BJ (cell line): ENCODE measurements at regions of chr3 and their contacts with region 1.

Region 1: DNA sequence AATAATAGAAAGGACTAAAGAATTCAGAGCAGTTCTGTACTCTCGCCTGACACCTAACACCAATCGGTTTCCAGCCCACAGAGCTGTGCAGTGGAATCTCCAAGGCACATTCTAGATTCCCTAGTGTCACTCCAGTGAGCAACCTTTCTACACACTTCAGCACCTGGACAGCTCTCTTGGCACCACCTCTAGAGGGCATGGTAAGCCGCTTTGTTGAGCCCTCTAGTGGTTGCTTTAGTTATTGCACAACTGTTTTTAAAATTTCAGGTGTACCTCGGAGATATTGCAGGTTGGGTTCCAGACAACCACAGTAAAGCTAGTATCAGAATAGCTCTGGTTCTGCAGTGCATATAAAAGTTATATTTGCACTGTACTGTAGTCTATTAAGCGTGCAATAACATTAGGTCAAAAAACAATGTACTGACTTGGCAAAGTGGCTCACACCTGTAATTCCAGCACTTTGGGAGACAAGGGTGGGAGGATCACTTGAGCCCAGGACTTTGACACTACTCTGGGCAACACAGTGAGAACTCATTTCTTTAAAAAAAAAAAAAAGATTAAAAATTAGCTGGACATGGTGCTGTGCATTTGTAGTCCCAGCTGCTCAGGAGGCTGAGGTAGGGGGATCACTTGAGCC is 26.5 kb upstream of the ERC2 start:
- DNase-seq: peak; percentile 0
- H3K4me3 ChIP-seq: no peak overlapping the region
- H3K27me3 ChIP-seq: no peaks in the 10 kb centered on the region
- CTCF ChIP-seq: peak; percentile 94

Region 2: DNA sequence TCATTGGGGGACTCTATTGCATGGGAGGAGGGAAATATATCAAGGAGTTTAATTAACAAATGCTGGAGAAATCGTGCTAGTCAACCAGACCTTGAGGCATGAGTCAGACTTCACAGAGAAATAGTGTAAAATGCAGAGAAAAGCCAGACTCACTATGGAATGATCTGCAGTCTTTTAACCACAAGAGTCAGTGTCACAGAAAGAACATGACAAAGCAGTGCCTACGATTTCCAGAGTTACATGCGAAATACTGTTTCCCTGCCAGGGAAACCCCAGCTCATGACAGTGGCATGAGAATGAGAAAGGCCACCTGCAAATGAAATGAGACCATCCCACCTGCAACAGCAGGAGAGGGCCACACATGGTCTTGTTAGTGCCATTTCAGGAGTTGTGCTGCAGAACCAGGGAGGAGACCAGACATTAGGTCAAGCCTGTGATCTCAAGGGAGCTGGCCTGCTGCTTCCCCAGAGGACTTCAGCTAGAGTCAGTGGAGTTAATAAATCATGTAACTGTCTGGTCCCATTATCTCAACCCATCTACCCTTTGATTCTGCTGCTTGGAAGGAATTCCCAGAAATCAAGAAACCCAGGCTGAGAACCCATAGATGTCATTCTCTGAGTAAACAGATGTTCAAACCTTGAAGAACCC is 105.5 kb before region 1 on chr3:
- CTCF ChIA-PET with region 1: no interaction called
- POLR2A ChIA-PET with region 1: no interaction called
- DNase-seq: no peak
- H3K4me3 ChIP-seq: no peak overlapping the region
- H3K27me3 ChIP-seq: no peaks in the 10 kb centered on the region
- CTCF ChIP-seq: no peak

Region 3: GRCh38 chr3:56484122-56484521 is 10.7 kb before region 1 on chr3:
- CTCF ChIA-PET with region 1: interaction called, 18 read pairs
- POLR2A ChIA-PET with region 1: no interaction called
- DNase-seq: no peak
- H3K4me3 ChIP-seq: no peak overlapping the region
- H3K27me3 ChIP-seq: no peaks in the 10 kb centered on the region
- CTCF ChIP-seq: no peak